Naive thymus-derived CD4-positive, alpha-beta T cell (primary cell): ENCODE measurements at regions of chr9 and their contacts with region 1.

Region 1: GRCh38 chr9:35603987-35604577 is 980 bp upstream of the TESK1 start:
- DNase-seq: peak; percentile 94 to 99 (median 99)
- ATAC-seq: peak; percentile 95
- H3K4me3 ChIP-seq: peak overlapping the region; percentile 65
- H3K4me3 Mint-ChIP-seq: peak overlapping the region; percentile 92 to 100 (median 98)
- H3K27ac ChIP-seq: peak overlapping the region; percentile 84
- H3K27ac Mint-ChIP-seq: peak overlapping the region; percentile 94 to 99 (median 98)
- H3K4me1 ChIP-seq: peaks cover 22 to 24% of the 10 kb centered on the region in 2 donors
- H3K4me1 Mint-ChIP-seq: peaks cover 21 to 42% (median 35%) of the 10 kb centered on the region in 7 donors
- H3K27me3 ChIP-seq: no peaks in the 10 kb centered on the region
- H3K27me3 Mint-ChIP-seq: no peaks in the 10 kb centered on the region

Region 2: DNA sequence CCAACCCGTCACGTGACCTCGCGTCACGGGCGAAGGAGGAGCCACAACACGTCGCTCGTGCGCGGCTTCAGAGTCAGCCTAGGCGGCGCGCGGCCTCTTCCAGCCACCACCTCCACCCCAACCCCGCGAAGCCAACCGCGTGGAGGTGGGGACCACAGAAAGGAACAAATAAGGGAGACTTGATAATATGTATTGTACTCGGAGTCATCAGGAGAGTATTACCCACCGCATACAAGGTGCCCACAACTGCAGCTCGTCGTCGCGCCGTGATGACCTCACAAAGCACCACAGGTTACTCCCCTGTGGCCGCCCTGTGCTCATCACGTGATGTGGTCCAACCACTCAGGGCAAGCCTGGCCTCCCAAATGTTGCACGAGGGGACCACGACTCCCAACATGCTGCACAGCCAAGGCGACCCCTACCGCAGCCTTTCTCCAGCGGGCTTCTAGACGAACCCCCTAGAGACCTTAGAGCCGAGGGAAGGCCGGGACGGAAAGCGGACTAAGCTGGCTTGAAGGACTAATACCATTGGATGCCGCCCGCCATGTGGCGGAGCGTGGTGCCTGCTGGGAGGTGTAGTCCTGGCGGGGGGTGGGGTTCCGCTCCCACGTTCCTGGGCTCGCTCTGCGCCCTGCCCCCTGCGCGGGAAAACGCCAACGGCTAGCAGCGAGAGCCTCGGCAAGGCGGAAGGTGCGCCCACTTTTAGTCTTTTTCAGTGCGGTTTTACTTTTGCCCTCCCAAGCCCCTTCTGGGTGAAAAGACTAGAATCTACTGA is 1555.0 kb before region 1 on chr9:
- CTCF ChIA-PET with region 1: no interaction called
- POLR2A ChIA-PET with region 1: no interaction called
- intact Hi-C with region 1: loop called in 1 of 2 experiments (anchors 10 kb)
- DNase-seq: peak; percentile 96 to 99 (median 97)
- ATAC-seq: peak; percentile 93
- H3K4me3 ChIP-seq: peak overlapping the region; percentile 98
- H3K4me3 Mint-ChIP-seq: peak overlapping the region; percentile 96 to 100 (median 98)
- H3K27ac ChIP-seq: peak overlapping the region; percentile 86
- H3K27ac Mint-ChIP-seq: peak overlapping the region; percentile 98 to 100 (median 99)
- H3K4me1 ChIP-seq: peaks cover 11 to 22% of the 10 kb centered on the region in 2 donors
- H3K4me1 Mint-ChIP-seq: peaks cover 25 to 55% (median 31%) of the 10 kb centered on the region in 7 donors
- H3K27me3 ChIP-seq: no peaks in the 10 kb centered on the region
- H3K27me3 Mint-ChIP-seq: peaks cover 0 to 4% (median 0%) of the 10 kb centered on the region in 5 donors

Region 3: GRCh38 chr9:34899535-34900158 is 704.4 kb before region 1 on chr9:
- CTCF ChIA-PET with region 1: no interaction called
- POLR2A ChIA-PET with region 1: no interaction called
- intact Hi-C with region 1: loop called in 1 of 2 experiments (anchors 1 kb)
- DNase-seq: peak; percentile 59 to 84 (median 77)
- ATAC-seq: peak; percentile 100
- H3K4me3 ChIP-seq: no peak overlapping the region
- H3K4me3 Mint-ChIP-seq: no peak overlapping the region
- H3K27ac ChIP-seq: no peak overlapping the region
- H3K27ac Mint-ChIP-seq: no peak overlapping the region
- H3K4me1 ChIP-seq: no peaks in the 10 kb centered on the region
- H3K4me1 Mint-ChIP-seq: no peaks in the 10 kb centered on the region
- H3K27me3 ChIP-seq: no peaks in the 10 kb centered on the region
- H3K27me3 Mint-ChIP-seq: peaks cover 27 to 59% (median 36%) of the 10 kb centered on the region in 5 donors

Region 4: DNA sequence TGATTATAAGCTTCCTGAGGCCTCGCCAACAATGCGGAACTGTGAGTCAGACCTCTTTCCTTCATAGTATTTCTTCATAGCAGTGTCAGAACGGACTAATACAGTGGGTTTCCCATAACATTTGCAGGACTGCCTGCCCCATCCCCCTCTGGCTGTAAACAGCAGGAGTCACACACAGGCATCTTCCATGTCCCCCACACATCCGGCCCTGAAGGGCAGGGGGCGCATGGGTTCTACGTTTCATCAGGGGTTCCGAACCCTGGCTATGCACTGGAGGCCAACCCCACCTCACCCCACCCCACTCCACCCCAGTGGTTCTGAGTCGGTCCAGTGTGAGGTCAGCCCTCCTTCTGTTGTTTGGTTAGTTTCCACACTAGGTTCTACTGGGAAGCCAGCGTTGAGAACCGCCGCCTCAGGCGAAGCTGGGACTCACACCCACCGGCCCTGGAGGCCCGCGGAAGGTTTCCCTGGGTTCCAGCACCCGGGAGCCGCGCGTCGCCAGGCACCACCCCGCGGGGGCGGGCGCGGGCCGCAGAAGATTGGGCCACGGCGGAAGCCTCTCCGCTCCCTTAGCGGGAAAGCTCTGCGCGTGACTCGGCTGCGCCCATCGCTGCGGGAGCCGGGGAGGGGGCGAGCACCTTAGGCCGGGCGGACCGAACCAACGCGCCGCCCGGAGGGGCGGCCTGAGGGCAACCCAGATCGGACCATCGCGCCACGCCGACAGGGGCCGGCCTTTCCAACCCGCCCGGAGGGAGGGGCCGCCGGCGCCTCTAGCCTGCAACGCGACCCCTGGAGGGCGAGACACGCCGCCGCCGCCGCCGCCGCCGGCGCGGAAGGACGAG is 114.5 kb before region 1 on chr9 and contains the start of gene RUSC2:
- CTCF ChIA-PET with region 1: no interaction called
- POLR2A ChIA-PET with region 1: no interaction called
- intact Hi-C with region 1: loop called (anchors 1 to 5 kb)
- DNase-seq: peak; percentile 12 to 75 (median 43)
- ATAC-seq: peak; percentile 84
- H3K4me3 ChIP-seq: peak within 1 kb of the TSS; percentile 54
- H3K4me3 Mint-ChIP-seq: peak within 1 kb of the TSS; percentile 83 to 96 (median 88)
- H3K27ac ChIP-seq: peak within 1 kb of the TSS; percentile 45
- H3K27ac Mint-ChIP-seq: peak within 1 kb of the TSS in 8 of 9 donors; percentile 22 to 78 (median 60)
- H3K4me1 ChIP-seq: peaks cover 0 to 4% of the 10 kb centered on the region in 2 donors
- H3K4me1 Mint-ChIP-seq: peaks cover 19 to 32% (median 28%) of the 10 kb centered on the region in 7 donors
- H3K27me3 ChIP-seq: no peaks in the 10 kb centered on the region
- H3K27me3 Mint-ChIP-seq: peaks cover 0 to 14% (median 0%) of the 10 kb centered on the region in 5 donors
- total RNA-seq, gene RUSC2: 3.1 to 8.3 (median 5.4) TPM

Region 5: GRCh38 chr9:35732122-35732799 is 128.2 kb after region 1 on chr9 and contains the starts of genes CREB3 and TLN1:
- CTCF ChIA-PET with region 1: interaction called, 5 read pairs
- POLR2A ChIA-PET with region 1: interaction called, 13 read pairs
- intact Hi-C with region 1: loop called (anchors 1 kb)
- DNase-seq: peak; percentile 86 to 98 (median 96)
- ATAC-seq: peak; percentile 94
- H3K4me3 ChIP-seq: peak within 1 kb of the TSS; percentile 98
- H3K4me3 Mint-ChIP-seq: peak within 1 kb of the TSS in 5 of 10 donors; percentile 87 to 97 (median 94)
- H3K27ac ChIP-seq: peak within 1 kb of the TSS; percentile 93
- H3K27ac Mint-ChIP-seq: peak within 1 kb of the TSS in 6 of 9 donors; percentile 80 to 96 (median 92)
- H3K4me1 ChIP-seq: peaks cover 56 to 60% of the 10 kb centered on the region in 2 donors
- H3K4me1 Mint-ChIP-seq: peaks cover 20 to 34% (median 22%) of the 10 kb centered on the region in 7 donors
- H3K27me3 ChIP-seq: no peaks in the 10 kb centered on the region
- H3K27me3 Mint-ChIP-seq: no peaks in the 10 kb centered on the region
- total RNA-seq, gene CREB3: 13.4 to 22.1 (median 20.9) TPM
- total RNA-seq, gene TLN1: 191 to 369 (median 241) TPM

Region 6: DNA sequence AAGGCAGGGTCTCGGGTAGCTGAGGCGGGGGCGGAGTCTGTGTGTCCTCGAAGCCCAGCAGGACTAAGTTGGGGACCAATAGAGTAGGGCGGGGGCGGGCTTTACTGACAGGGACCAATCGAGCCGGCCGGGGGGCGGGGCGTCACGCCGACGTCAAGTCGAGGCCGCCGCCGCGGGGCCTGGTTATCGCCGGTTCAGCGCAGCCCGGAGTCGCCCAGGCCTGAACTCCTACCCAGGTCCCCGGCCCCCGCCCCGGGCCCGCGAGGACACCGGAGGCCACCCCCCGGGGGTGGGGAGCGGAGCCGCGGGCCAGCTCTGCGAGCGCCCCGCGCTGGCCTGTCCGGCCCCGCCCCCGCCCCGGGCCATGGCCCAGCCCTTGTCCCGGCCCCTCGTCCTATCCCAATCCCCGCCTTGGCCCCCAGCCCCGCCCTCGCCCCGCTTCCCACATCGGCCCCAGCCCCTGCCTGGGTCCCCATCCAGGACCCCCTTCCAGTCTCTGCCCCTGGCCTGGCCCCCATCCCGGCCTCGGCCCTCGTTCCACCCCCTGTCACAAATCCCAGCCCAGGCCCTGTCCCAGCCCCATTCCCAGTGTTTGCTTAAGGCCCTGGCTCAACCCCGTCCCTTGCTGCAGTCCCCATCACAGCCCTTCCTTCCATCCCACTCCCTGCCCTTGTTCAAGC is 225.1 kb after region 1 on chr9 and contains the start of gene TMEM8B:
- CTCF ChIA-PET with region 1: no interaction called
- POLR2A ChIA-PET with region 1: no interaction called
- intact Hi-C with region 1: loop called (anchors 1 to 5 kb)
- DNase-seq: peak; percentile 80 to 95 (median 88)
- ATAC-seq: peak; percentile 95
- H3K4me3 ChIP-seq: peak within 1 kb of the TSS; percentile 88
- H3K4me3 Mint-ChIP-seq: peak within 1 kb of the TSS; percentile 84 to 100 (median 94)
- H3K27ac ChIP-seq: peak within 1 kb of the TSS; percentile 94
- H3K27ac Mint-ChIP-seq: peak within 1 kb of the TSS; percentile 91 to 99 (median 94)
- H3K4me1 ChIP-seq: peaks cover 4 to 14% of the 10 kb centered on the region in 2 donors
- H3K4me1 Mint-ChIP-seq: peaks cover 25 to 48% (median 43%) of the 10 kb centered on the region in 7 donors
- H3K27me3 ChIP-seq: no peaks in the 10 kb centered on the region
- H3K27me3 Mint-ChIP-seq: peaks cover 0 to 5% (median 0%) of the 10 kb centered on the region in 5 donors
- total RNA-seq, gene TMEM8B: 3.9 to 11.6 (median 10.6) TPM

Region 7: GRCh38 chr9:35923927-35924763 is 320.1 kb after region 1 on chr9:
- CTCF ChIA-PET with region 1: no interaction called
- POLR2A ChIA-PET with region 1: no interaction called
- intact Hi-C with region 1: no loop called
- DNase-seq: no peak
- ATAC-seq: no peak
- H3K4me3 ChIP-seq: no peak overlapping the region
- H3K4me3 Mint-ChIP-seq: no peak overlapping the region
- H3K27ac ChIP-seq: no peak overlapping the region
- H3K27ac Mint-ChIP-seq: peak overlapping the region in 1 of 9 donors; percentile 19
- H3K4me1 ChIP-seq: no peaks in the 10 kb centered on the region
- H3K4me1 Mint-ChIP-seq: peaks cover 1 to 27% (median 14%) of the 10 kb centered on the region in 7 donors
- H3K27me3 ChIP-seq: no peaks in the 10 kb centered on the region
- H3K27me3 Mint-ChIP-seq: peaks cover 0 to 20% (median 0%) of the 10 kb centered on the region in 5 donors